CD8-positive, alpha-beta T cell (primary cell): ENCODE measurements at regions of chr1 and their contacts with region 1.

Region 1: DNA sequence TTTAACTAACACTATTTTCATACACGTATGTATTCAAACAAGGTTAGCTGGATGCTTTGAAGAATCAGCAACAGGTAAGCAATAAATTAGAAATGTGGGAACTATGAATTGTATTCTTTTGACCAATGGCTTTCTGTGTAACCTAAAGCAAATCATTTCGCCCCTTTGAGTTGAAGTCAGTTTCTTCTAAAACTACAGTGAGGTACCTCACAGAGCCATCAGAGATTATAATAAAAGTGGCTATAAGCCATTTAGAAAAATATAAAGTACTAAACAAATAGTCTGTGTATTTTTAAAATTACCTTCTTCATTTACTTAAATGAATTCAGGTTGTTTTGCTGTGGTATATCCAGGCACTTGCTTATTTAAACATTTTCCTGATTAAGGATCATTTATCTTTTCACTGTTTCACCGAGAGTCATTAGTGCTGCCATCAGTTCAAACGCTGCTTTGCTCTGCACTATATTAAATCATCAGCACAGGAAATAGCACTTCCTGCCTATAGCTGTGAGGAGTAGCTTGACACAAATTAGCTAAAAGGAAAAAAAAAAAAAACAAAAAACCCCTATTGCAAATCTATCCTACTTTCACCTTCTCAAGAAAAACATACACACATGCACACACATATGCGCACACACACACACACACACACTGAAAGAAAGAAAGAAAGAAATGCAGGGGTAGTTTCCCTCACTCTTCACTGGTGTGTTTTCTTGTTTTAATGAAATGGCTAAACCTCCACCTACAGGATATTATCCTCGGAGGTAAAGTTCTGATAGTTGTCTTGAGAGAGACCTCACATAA is 39.8 kb upstream of the C1orf105 start:
- DNase-seq: peak in 6 of 9 experiments; percentile 17 to 83 (median 43)
- ATAC-seq: peak; percentile 95
- H3K4me3 ChIP-seq: peak overlapping the region; percentile 22 to 25
- H3K4me3 Mint-ChIP-seq: peak overlapping the region; percentile 80
- H3K27ac ChIP-seq: peak overlapping the region; percentile 14 to 84
- H3K27ac Mint-ChIP-seq: peak overlapping the region; percentile 97
- H3K4me1 ChIP-seq: peaks cover 14% of the 10 kb centered on the region
- H3K4me1 Mint-ChIP-seq: peaks cover 39% of the 10 kb centered on the region
- H3K27me3 ChIP-seq: no peaks in the 10 kb centered on the region
- H3K27me3 Mint-ChIP-seq: no peaks in the 10 kb centered on the region
- CTCF ChIP-seq: no peak

Region 2: GRCh38 chr1:172180501-172181285 is 199.9 kb before region 1 on chr1:
- CTCF ChIA-PET with region 1: no interaction called
- POLR2A ChIA-PET with region 1: no interaction called
- intact Hi-C with region 1: loop called in 1 of 2 experiments (anchors 1 kb)
- DNase-seq: peak in 7 of 9 experiments; percentile 13 to 73 (median 44)
- ATAC-seq: peak; percentile 66
- H3K4me3 ChIP-seq: peak overlapping the region; percentile 17 to 37
- H3K4me3 Mint-ChIP-seq: peak overlapping the region; percentile 76
- H3K27ac ChIP-seq: peak overlapping the region; percentile 46 to 87
- H3K27ac Mint-ChIP-seq: peak overlapping the region; percentile 96
- H3K4me1 ChIP-seq: peaks cover 24% of the 10 kb centered on the region
- H3K4me1 Mint-ChIP-seq: peaks cover 37% of the 10 kb centered on the region
- H3K27me3 ChIP-seq: no peaks in the 10 kb centered on the region
- H3K27me3 Mint-ChIP-seq: no peaks in the 10 kb centered on the region
- CTCF ChIP-seq: no peak

Region 3: GRCh38 chr1:172322219-172323061 is 58.2 kb before region 1 on chr1:
- CTCF ChIA-PET with region 1: no interaction called
- POLR2A ChIA-PET with region 1: no interaction called
- intact Hi-C with region 1: no loop called
- DNase-seq: no peak
- ATAC-seq: no peak
- H3K4me3 ChIP-seq: no peak overlapping the region
- H3K4me3 Mint-ChIP-seq: no peak overlapping the region
- H3K27ac ChIP-seq: no peak overlapping the region
- H3K27ac Mint-ChIP-seq: no peak overlapping the region
- H3K4me1 ChIP-seq: no peaks in the 10 kb centered on the region
- H3K4me1 Mint-ChIP-seq: no peaks in the 10 kb centered on the region
- H3K27me3 ChIP-seq: no peaks in the 10 kb centered on the region
- H3K27me3 Mint-ChIP-seq: no peaks in the 10 kb centered on the region
- CTCF ChIP-seq: no peak

Region 4: DNA sequence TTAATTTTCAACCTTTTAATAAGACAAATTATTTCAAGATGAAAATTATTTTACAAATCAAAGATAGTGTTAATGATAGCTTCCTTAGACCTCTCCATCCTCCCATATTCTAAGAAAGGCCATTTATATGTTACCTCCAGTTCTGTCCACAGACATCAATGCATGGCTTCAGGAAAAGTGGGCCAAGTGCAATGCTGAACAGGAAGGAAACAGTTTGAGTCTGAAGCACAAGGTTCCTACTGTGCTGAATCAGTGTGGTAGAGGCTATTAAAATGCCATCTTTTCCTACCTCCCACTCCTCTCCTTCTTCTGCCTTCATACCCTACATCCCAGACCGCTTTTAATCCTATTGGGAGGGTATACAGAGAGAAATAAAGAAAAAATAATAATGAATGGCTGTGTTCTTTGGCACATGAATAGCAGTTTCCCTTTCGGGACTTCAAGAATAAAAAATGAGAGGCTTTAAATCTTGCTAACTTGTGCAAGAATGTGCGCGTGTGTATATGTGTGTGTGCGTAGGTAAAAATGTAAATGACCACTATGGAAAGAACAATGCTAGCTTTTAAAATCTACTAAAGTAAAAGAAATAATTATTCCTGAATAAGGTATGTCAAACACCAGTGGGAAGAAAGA is 22.8 kb before region 1 on chr1:
- CTCF ChIA-PET with region 1: no interaction called
- POLR2A ChIA-PET with region 1: interaction called, 21 read pairs
- intact Hi-C with region 1: loop called (anchors 1 to 2 kb)
- DNase-seq: peak in 2 of 9 experiments; percentile 23 to 39
- ATAC-seq: peak; percentile 17
- H3K4me3 ChIP-seq: no peak overlapping the region
- H3K4me3 Mint-ChIP-seq: peak overlapping the region; percentile 40
- H3K27ac ChIP-seq: peak overlapping the region in 1 of 2 experiments; percentile 77
- H3K27ac Mint-ChIP-seq: peak overlapping the region; percentile 82
- H3K4me1 ChIP-seq: peaks cover 35% of the 10 kb centered on the region
- H3K4me1 Mint-ChIP-seq: peaks cover 54% of the 10 kb centered on the region
- H3K27me3 ChIP-seq: no peaks in the 10 kb centered on the region
- H3K27me3 Mint-ChIP-seq: no peaks in the 10 kb centered on the region
- CTCF ChIP-seq: no peak

Region 5: DNA sequence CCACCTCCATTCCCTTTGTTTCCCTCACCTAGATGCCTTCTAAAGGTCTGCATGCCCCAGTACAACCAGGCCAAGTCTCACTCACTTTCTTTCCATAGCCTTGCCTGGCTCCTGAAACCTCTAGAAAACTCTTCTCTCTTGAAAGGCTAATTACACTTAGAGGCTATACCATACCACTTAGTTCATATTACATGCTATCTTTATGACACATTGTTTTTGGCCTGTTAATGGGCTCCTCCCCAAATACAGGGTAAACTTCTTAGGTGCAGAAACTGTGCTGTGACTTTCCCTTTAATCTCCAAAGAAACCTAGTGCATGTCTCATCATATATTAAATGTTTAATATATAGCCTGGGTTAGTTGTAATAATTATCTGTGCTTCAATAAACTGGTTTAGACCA is 16.8 kb before region 1 on chr1:
- CTCF ChIA-PET with region 1: no interaction called
- POLR2A ChIA-PET with region 1: interaction called, 21 read pairs
- intact Hi-C with region 1: loop called in 1 of 2 experiments (anchors 2 kb)
- DNase-seq: no peak
- ATAC-seq: no peak
- H3K4me3 ChIP-seq: no peak overlapping the region
- H3K4me3 Mint-ChIP-seq: no peak overlapping the region
- H3K27ac ChIP-seq: no peak overlapping the region
- H3K27ac Mint-ChIP-seq: no peak overlapping the region
- H3K4me1 ChIP-seq: peaks cover 22% of the 10 kb centered on the region
- H3K4me1 Mint-ChIP-seq: peaks cover 22% of the 10 kb centered on the region
- H3K27me3 ChIP-seq: no peaks in the 10 kb centered on the region
- H3K27me3 Mint-ChIP-seq: no peaks in the 10 kb centered on the region
- CTCF ChIP-seq: no peak

Region 6: GRCh38 chr1:173330149-173330951 is 949.7 kb after region 1 on chr1:
- CTCF ChIA-PET with region 1: no interaction called
- POLR2A ChIA-PET with region 1: no interaction called
- intact Hi-C with region 1: no loop called
- DNase-seq: no peak
- ATAC-seq: no peak
- H3K4me3 ChIP-seq: no peak overlapping the region
- H3K4me3 Mint-ChIP-seq: no peak overlapping the region
- H3K27ac ChIP-seq: no peak overlapping the region
- H3K27ac Mint-ChIP-seq: no peak overlapping the region
- H3K4me1 ChIP-seq: no peaks in the 10 kb centered on the region
- H3K4me1 Mint-ChIP-seq: peaks cover 24% of the 10 kb centered on the region
- H3K27me3 ChIP-seq: no peaks in the 10 kb centered on the region
- H3K27me3 Mint-ChIP-seq: no peaks in the 10 kb centered on the region
- CTCF ChIP-seq: no peak